GM12878 (cell line): ENCODE measurements at regions of chr1 and their contacts with region 1.

Region 1: GRCh38 chr1:226062558-226063223 is at the start of gene H3-3A:
- DNase-seq: peak; percentile 66
- ATAC-seq: peak; percentile 88
- H3K4me3 ChIP-seq: peak within 1 kb of the TSS; percentile 91
- H3K27ac ChIP-seq: peak within 1 kb of the TSS; percentile 97
- H3K4me1 ChIP-seq: peaks cover 8% of the 10 kb centered on the region
- H3K27me3 ChIP-seq: no peaks in the 10 kb centered on the region
- CTCF ChIP-seq: no peak
- EP300 ChIP-seq: no peak
- POLR2A ChIP-seq: peak; percentile 91
- RAD21 ChIP-seq: no peak
- polyA plus RNA-seq, gene H3-3A: 254 to 435 TPM

Region 2: DNA sequence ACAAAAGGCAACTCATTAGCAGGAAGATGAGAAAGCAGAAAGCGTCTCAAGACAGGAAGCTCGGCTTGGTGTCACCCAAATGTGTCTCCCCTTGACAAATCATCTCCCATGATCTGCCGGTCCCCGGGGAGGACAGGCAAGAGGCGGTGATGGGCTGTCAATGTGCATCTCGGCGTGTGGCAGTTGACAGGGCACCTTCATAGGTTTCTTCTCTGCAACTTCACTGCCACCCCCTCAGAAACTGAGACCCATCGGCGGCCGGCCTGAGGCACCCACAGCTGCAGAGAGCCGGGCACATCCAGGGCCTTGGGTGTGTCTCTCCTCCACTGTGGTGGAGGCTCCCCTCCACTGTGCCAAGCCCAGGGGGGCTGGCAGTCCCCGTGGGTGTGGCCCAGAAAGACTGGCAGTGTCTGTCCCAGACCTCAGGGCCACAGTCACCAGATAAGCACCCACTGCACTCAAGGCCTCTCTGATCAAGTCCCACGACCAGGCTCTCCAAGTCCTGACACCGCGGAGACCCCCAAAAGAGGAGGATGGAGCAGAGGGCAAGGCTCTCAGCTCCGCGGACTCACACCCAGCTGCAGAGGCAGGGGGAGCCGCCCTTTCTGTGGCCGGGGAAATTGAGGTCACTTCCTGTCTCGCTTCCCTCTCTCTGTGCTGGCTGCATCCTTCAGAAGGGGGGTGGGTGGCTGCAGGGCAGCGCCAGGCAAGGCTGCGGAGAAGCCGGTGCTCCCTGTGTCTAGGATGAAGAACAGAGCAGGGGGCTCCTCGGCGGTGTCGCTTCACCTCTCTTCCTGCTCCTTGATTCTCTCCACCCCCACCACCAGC is 595.3 kb before region 1 on chr1:
- CTCF ChIA-PET with region 1: interaction called, 6 read pairs
- POLR2A ChIA-PET with region 1: interaction called, 3 read pairs
- RAD21 ChIA-PET with region 1: interaction called, 3 read pairs
- SMC1A ChIA-PET with region 1: no interaction called
- in situ Hi-C with region 1: no loop called
- intact Hi-C with region 1: loop called (anchors 1 kb)
- DNase-seq: peak; percentile 74
- ATAC-seq: peak; percentile 96
- H3K4me3 ChIP-seq: peak overlapping the region; percentile 71
- H3K27ac ChIP-seq: peak overlapping the region; percentile 96
- H3K4me1 ChIP-seq: peaks cover 13% of the 10 kb centered on the region; the same call in 1 of the 2 replicates
- H3K27me3 ChIP-seq: no peaks in the 10 kb centered on the region
- CTCF ChIP-seq: no peak
- EP300 ChIP-seq: peak in 1 of 2 experiments; percentile 32; a peak in 1 of 4 replicates
- POLR2A ChIP-seq: peak; percentile 88
- RAD21 ChIP-seq: 0 out of 2 replicates have a peak, but pooled peaks have one; percentile 4

Region 3: GRCh38 chr1:225977937-225978748 is 84.5 kb before region 1 on chr1:
- CTCF ChIA-PET with region 1: interaction called, 19 read pairs
- POLR2A ChIA-PET with region 1: interaction called, 4 read pairs
- RAD21 ChIA-PET with region 1: interaction called, 12 read pairs
- SMC1A ChIA-PET with region 1: interaction called, 52 read pairs
- in situ Hi-C with region 1: no loop called
- intact Hi-C with region 1: no loop called
- DNase-seq: peak; percentile 45
- ATAC-seq: peak; percentile 85
- H3K4me3 ChIP-seq: no peak overlapping the region
- H3K27ac ChIP-seq: no peak overlapping the region
- H3K4me1 ChIP-seq: 0 out of 2 replicates have a peak, but pooled peaks cover 5% of the 10 kb centered on the region
- H3K27me3 ChIP-seq: no peaks in the 10 kb centered on the region
- CTCF ChIP-seq: peak; percentile 9 to 54 (median 11); a peak in 4 of 6 replicates
- EP300 ChIP-seq: no peak
- POLR2A ChIP-seq: no peak
- RAD21 ChIP-seq: peak; percentile 51

Region 4: GRCh38 chr1:226029093-226029496 is 33.6 kb before region 1 on chr1:
- CTCF ChIA-PET with region 1: interaction called, 12 read pairs
- POLR2A ChIA-PET with region 1: interaction called, 23 read pairs
- RAD21 ChIA-PET with region 1: interaction called, 16 read pairs
- SMC1A ChIA-PET with region 1: interaction called, 4 read pairs
- in situ Hi-C with region 1: no loop called
- intact Hi-C with region 1: no loop called
- DNase-seq: peak; percentile 59
- ATAC-seq: peak; percentile 93
- H3K4me3 ChIP-seq: no peak overlapping the region
- H3K27ac ChIP-seq: peak overlapping the region; percentile 36
- H3K4me1 ChIP-seq: peaks cover 26% of the 10 kb centered on the region
- H3K27me3 ChIP-seq: no peaks in the 10 kb centered on the region
- CTCF ChIP-seq: no peak
- EP300 ChIP-seq: peak; percentile 81 to 83
- POLR2A ChIP-seq: no peak
- RAD21 ChIP-seq: no peak

Region 5: DNA sequence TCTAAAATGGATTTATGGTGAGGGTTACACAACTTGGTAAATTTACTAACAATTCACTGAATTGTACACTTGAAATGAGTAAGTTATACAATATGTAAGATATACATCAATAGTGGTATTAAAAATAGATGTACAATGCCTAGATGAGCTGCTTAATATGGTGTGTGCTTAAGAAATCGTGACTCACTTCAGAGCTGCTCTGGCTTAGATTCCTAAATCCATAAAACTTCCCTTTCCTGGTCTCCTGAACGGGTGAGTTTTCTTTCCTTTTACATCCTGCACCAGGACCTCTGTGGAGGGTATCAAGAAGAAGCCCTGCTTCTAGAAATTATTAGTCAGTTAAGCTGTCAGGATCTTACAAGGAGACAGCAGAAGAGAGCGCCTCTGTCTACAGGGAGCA is 30.3 kb after region 1 on chr1:
- CTCF ChIA-PET with region 1: interaction called, 14 read pairs
- POLR2A ChIA-PET with region 1: interaction called, 3 read pairs
- RAD21 ChIA-PET with region 1: interaction called, 3 read pairs
- SMC1A ChIA-PET with region 1: interaction called, 8 read pairs
- in situ Hi-C with region 1: no loop called
- intact Hi-C with region 1: no loop called
- DNase-seq: no peak
- ATAC-seq: no peak
- H3K4me3 ChIP-seq: no peak overlapping the region
- H3K27ac ChIP-seq: no peak overlapping the region
- H3K4me1 ChIP-seq: no peaks in the 10 kb centered on the region
- H3K27me3 ChIP-seq: no peaks in the 10 kb centered on the region
- CTCF ChIP-seq: no peak
- EP300 ChIP-seq: no peak
- POLR2A ChIP-seq: no peak
- RAD21 ChIP-seq: no peak

Region 6: GRCh38 chr1:226186124-226187018 is 123.7 kb after region 1 on chr1 and contains the start of gene ACBD3:
- CTCF ChIA-PET with region 1: interaction called, 12 read pairs
- POLR2A ChIA-PET with region 1: interaction called, 10 read pairs
- RAD21 ChIA-PET with region 1: interaction called, 4 read pairs
- SMC1A ChIA-PET with region 1: interaction called, 5 read pairs
- in situ Hi-C with region 1: no loop called
- intact Hi-C with region 1: no loop called
- DNase-seq: peak; percentile 41
- ATAC-seq: peak; percentile 92
- H3K4me3 ChIP-seq: peak within 1 kb of the TSS; percentile 94
- H3K27ac ChIP-seq: peak within 1 kb of the TSS; percentile 88
- H3K4me1 ChIP-seq: peaks cover 7% of the 10 kb centered on the region; the same call in 1 of the 2 replicates
- H3K27me3 ChIP-seq: no peaks in the 10 kb centered on the region
- CTCF ChIP-seq: no peak; a peak in 1 of 6 replicates
- EP300 ChIP-seq: no peak
- POLR2A ChIP-seq: peak; percentile 100
- RAD21 ChIP-seq: no peak
- polyA plus RNA-seq, gene ACBD3: 7.5 to 8.9 TPM